Activated CD8-positive, alpha-beta memory T cell treated with anti-CD3 and anti-CD28 coated beads, Interleukin-2, amount 10 ng/mL, durations not matched to agents 7 days and 5 days (primary cell): ENCODE measurements at regions of chr6 and their contacts with region 1.

Region 1: DNA sequence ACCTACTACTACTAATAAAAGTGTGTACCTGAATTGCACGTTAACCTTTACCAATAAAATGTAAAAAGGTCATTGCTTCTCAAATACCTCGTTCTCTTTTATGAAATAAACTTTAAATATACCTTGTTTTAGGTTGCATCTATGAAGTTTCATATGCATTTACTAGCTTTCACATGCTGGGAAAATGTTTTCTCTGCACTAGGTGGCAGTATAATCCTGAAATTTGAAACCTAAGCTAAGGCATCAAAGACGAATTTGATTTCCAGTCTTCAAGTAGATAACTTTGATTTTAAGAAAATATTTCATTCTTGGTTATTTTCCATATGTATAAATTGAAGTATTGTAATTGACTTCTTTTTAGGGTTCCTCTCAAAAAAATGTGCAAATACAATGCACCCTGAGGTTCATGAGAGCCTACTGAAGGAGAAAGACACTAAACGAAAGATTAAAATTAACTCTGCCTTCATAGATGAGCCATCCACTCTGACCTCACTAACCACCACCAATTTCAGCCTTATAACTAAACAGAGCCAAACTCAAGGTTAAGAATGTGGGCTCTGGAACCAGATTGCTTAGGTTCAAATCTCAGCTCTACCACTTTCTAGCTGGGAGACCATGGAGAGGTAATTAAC is 7.3 kb upstream of the COL9A1 start:
- DNase-seq: no peak
- ATAC-seq: no peak
- H3K4me3 Mint-ChIP-seq: no peak overlapping the region
- H3K27ac Mint-ChIP-seq: no peak overlapping the region
- H3K4me1 Mint-ChIP-seq: no peaks in the 10 kb centered on the region
- H3K27me3 Mint-ChIP-seq: peaks cover 32% of the 10 kb centered on the region

Region 2: DNA sequence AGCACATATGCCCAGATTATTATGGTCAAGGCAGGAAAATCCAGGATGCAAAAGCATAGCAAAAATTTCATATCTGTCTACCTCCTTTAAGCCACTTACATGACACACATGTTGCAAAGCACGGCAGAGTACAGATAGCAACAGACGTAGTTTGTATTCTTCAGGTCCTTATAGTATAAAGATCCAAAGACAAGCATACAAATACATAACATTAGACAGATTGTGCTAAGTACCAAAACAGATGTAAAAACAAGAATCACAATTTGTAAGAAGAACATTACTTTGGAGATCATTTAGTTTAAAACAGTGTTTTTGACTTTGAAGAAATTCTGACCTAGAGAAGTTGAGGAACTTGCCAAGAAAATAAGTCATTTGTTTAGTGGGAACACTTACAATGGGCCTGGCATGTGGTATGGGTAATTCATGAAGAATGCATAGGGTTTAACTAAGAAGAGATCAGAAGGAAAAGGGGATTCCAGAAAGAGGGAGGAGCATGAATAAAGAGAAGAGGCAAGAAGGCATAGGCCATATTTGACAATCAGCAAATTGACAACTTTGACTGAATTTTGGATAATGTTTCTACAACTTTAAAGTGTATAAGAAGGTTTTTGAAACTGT is 482.8 kb before region 1 on chr6:
- CTCF ChIA-PET with region 1: no interaction called
- DNase-seq: no peak
- ATAC-seq: no peak
- H3K4me3 Mint-ChIP-seq: no peak overlapping the region
- H3K27ac Mint-ChIP-seq: no peak overlapping the region
- H3K4me1 Mint-ChIP-seq: no peaks in the 10 kb centered on the region
- H3K27me3 Mint-ChIP-seq: no peaks in the 10 kb centered on the region

Region 3: DNA sequence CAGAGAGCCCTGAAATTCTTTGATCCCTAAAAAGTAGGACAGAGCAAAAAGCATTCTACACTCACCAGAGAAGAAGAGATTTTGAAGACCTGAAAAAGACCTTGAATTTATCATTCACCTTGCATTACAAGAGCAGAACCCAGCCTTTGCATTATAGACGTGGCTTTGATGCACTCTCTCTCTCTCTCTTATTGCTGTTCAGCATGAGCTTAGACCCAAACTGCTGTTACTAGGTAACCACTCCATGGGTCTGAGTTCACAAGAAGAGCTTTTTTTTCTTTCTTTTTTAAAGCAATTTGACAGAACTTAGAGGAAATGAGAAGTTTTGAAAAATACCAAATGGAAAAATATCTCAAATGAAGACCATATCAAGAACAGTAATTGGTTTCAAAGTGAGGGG is 51.7 kb before region 1 on chr6:
- CTCF ChIA-PET with region 1: no interaction called
- DNase-seq: no peak
- ATAC-seq: no peak
- H3K4me3 Mint-ChIP-seq: no peak overlapping the region
- H3K27ac Mint-ChIP-seq: no peak overlapping the region
- H3K4me1 Mint-ChIP-seq: no peaks in the 10 kb centered on the region
- H3K27me3 Mint-ChIP-seq: peaks cover 2% of the 10 kb centered on the region

Region 4: GRCh38 chr6:70369332-70369950 is 59.3 kb after region 1 on chr6:
- CTCF ChIA-PET with region 1: interaction called, 42 read pairs
- DNase-seq: peak; percentile 69
- ATAC-seq: peak; percentile 73
- H3K4me3 Mint-ChIP-seq: no peak overlapping the region
- H3K27ac Mint-ChIP-seq: no peak overlapping the region
- H3K4me1 Mint-ChIP-seq: no peaks in the 10 kb centered on the region
- H3K27me3 Mint-ChIP-seq: peaks cover 33% of the 10 kb centered on the region

Region 5: GRCh38 chr6:70409216-70409615 is 99.0 kb after region 1 on chr6:
- CTCF ChIA-PET with region 1: no interaction called
- DNase-seq: no peak
- ATAC-seq: no peak
- H3K4me3 Mint-ChIP-seq: no peak overlapping the region
- H3K27ac Mint-ChIP-seq: no peak overlapping the region
- H3K4me1 Mint-ChIP-seq: peaks cover 12% of the 10 kb centered on the region
- H3K27me3 Mint-ChIP-seq: peaks cover 29% of the 10 kb centered on the region

Region 6: GRCh38 chr6:70456735-70457134 is 146.6 kb after region 1 on chr6:
- CTCF ChIA-PET with region 1: no interaction called
- DNase-seq: no peak
- ATAC-seq: no peak
- H3K4me3 Mint-ChIP-seq: no peak overlapping the region
- H3K27ac Mint-ChIP-seq: no peak overlapping the region
- H3K4me1 Mint-ChIP-seq: peaks cover 3% of the 10 kb centered on the region
- H3K27me3 Mint-ChIP-seq: no peaks in the 10 kb centered on the region